T-cell (primary cell): ENCODE measurements at regions of chr6 and their contacts with region 1.

Region 1: GRCh38 chr6:17269840-17270239 is 11.3 kb upstream of the RBM24 start:
- DNase-seq: no peak
- ATAC-seq: no peak
- H3K4me3 ChIP-seq: no peak overlapping the region
- H3K4me3 Mint-ChIP-seq: no peak overlapping the region
- H3K27ac ChIP-seq: no peak overlapping the region
- H3K27ac Mint-ChIP-seq: no peak overlapping the region
- H3K4me1 ChIP-seq: no peaks in the 10 kb centered on the region
- H3K4me1 Mint-ChIP-seq: no peaks in the 10 kb centered on the region
- H3K27me3 ChIP-seq: peaks cover 0 to 4% of the 10 kb centered on the region in 2 experiments
- H3K27me3 Mint-ChIP-seq: peaks cover 21 to 22% of the 10 kb centered on the region in 2 donors

Region 2: DNA sequence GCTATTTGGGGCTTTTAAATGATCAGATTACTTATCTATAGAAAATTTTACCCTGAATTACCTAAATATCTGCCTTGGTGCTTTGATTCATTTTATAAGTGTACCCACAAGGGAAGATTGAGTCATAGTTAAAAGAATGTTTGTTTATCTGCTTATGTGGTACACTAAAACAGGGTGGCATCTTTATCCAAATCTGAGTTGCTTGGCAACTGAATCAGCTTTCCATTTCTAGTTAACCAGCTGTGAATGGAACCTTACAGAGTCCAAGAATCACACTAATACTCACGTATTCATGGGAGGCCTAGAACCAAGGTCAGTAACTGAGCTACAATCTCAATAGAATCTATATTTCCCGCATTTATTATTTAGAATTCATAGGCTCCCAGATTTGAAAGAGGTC is 79.6 kb after region 1 on chr6:
- CTCF ChIA-PET with region 1: no interaction called
- POLR2A ChIA-PET with region 1: interaction called in 1 of 2 experiments, 15 read pairs
- DNase-seq: no peak
- ATAC-seq: no peak
- H3K4me3 ChIP-seq: no peak overlapping the region
- H3K4me3 Mint-ChIP-seq: no peak overlapping the region
- H3K27ac ChIP-seq: no peak overlapping the region
- H3K27ac Mint-ChIP-seq: no peak overlapping the region
- H3K4me1 ChIP-seq: no peaks in the 10 kb centered on the region
- H3K4me1 Mint-ChIP-seq: no peaks in the 10 kb centered on the region
- H3K27me3 ChIP-seq: no peaks in the 10 kb centered on the region
- H3K27me3 Mint-ChIP-seq: peaks cover 0 to 3% of the 10 kb centered on the region in 2 donors